Naive thymus-derived CD4-positive, alpha-beta T cell (primary cell): ENCODE measurements at regions of chr12 and their contacts with region 1.

Region 1: DNA sequence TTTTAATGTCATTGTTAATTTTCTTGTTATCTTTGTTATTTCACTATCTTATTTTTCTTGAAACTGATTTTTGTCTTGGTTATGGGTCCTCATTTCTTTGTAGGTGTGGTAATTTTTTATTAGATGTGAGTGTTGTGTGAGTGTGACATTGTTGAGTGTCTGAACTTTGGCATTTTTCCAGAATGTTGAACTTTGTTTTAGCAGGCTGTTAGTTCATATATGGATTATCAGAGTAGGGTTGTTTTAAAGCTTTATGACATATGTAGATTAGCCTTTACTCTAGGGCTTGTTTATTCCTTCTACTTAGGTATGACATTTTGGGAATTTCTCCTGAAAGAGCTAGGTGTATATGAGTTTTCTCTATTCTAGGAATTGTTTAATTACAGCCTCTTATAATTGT is 103.9 kb downstream of the ARID2 start:
- DNase-seq: no peak
- ATAC-seq: no peak
- H3K4me3 ChIP-seq: no peak overlapping the region
- H3K4me3 Mint-ChIP-seq: no peak overlapping the region
- H3K27ac ChIP-seq: no peak overlapping the region
- H3K27ac Mint-ChIP-seq: peak overlapping the region in 2 of 9 donors; percentile 39 to 66
- H3K4me1 ChIP-seq: no peaks in the 10 kb centered on the region
- H3K4me1 Mint-ChIP-seq: peaks cover 0 to 15% (median 8%) of the 10 kb centered on the region in 7 donors
- H3K27me3 ChIP-seq: no peaks in the 10 kb centered on the region
- H3K27me3 Mint-ChIP-seq: no peaks in the 10 kb centered on the region

Region 2: GRCh38 chr12:45816652-45817051 is 16.7 kb before region 1 on chr12:
- CTCF ChIA-PET with region 1: no interaction called
- POLR2A ChIA-PET with region 1: no interaction called
- intact Hi-C with region 1: loop called in 1 of 2 experiments (anchors 2 kb)
- DNase-seq: no peak
- ATAC-seq: no peak
- H3K4me3 ChIP-seq: no peak overlapping the region
- H3K4me3 Mint-ChIP-seq: no peak overlapping the region
- H3K27ac ChIP-seq: no peak overlapping the region
- H3K27ac Mint-ChIP-seq: peak overlapping the region in 1 of 9 donors; percentile 73
- H3K4me1 ChIP-seq: no peaks in the 10 kb centered on the region
- H3K4me1 Mint-ChIP-seq: peaks cover 0 to 8% (median 3%) of the 10 kb centered on the region in 7 donors
- H3K27me3 ChIP-seq: no peaks in the 10 kb centered on the region
- H3K27me3 Mint-ChIP-seq: no peaks in the 10 kb centered on the region

Region 3: GRCh38 chr12:45866299-45866698 is 32.9 kb after region 1 on chr12:
- CTCF ChIA-PET with region 1: no interaction called
- POLR2A ChIA-PET with region 1: no interaction called
- intact Hi-C with region 1: loop called in 1 of 2 experiments (anchors 5 kb)
- DNase-seq: no peak
- ATAC-seq: no peak
- H3K4me3 ChIP-seq: no peak overlapping the region
- H3K4me3 Mint-ChIP-seq: no peak overlapping the region
- H3K27ac ChIP-seq: no peak overlapping the region
- H3K27ac Mint-ChIP-seq: no peak overlapping the region
- H3K4me1 ChIP-seq: no peaks in the 10 kb centered on the region
- H3K4me1 Mint-ChIP-seq: peaks cover 0 to 14% (median 4%) of the 10 kb centered on the region in 7 donors
- H3K27me3 ChIP-seq: no peaks in the 10 kb centered on the region
- H3K27me3 Mint-ChIP-seq: no peaks in the 10 kb centered on the region

Region 4: DNA sequence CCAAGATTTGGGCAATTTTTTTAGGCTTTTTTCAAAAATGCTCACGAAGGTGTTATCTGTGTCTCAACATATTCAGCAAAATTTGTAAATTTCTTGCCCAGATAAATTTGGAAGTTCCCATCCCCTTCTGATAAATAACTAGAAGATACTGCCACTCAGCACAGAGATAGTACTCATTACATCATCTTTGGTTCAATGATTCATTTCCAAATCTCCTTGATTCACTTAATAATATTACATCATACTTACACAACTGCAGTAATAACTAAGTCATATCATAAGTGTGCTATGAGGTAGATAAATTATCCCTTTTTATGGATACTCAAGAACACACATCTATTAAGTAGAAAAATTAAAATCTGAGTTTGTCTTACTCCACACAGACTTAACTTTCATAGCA is 1783.0 kb after region 1 on chr12:
- CTCF ChIA-PET with region 1: no interaction called
- POLR2A ChIA-PET with region 1: no interaction called
- intact Hi-C with region 1: loop called in 1 of 2 experiments (anchors 5 kb)
- DNase-seq: no peak
- ATAC-seq: no peak
- H3K4me3 ChIP-seq: no peak overlapping the region
- H3K4me3 Mint-ChIP-seq: no peak overlapping the region
- H3K27ac ChIP-seq: no peak overlapping the region
- H3K27ac Mint-ChIP-seq: no peak overlapping the region
- H3K4me1 ChIP-seq: no peaks in the 10 kb centered on the region
- H3K4me1 Mint-ChIP-seq: no peaks in the 10 kb centered on the region
- H3K27me3 ChIP-seq: no peaks in the 10 kb centered on the region
- H3K27me3 Mint-ChIP-seq: no peaks in the 10 kb centered on the region